MCF 10A (cell line): ENCODE measurements at regions of chr3 and their contacts with region 1.

Region 1: GRCh38 chr3:111717601-111718000 is 122.5 kb upstream of the ZBED2 start:
- DNase-seq: peak; percentile 92
- H3K4me3 Mint-ChIP-seq: no peak overlapping the region
- H3K27ac Mint-ChIP-seq: peak overlapping the region; percentile 27
- H3K4me1 Mint-ChIP-seq: peaks cover 20% of the 10 kb centered on the region
- H3K27me3 Mint-ChIP-seq: no peaks in the 10 kb centered on the region
- CTCF ChIP-seq: peak; percentile 82

Region 2: DNA sequence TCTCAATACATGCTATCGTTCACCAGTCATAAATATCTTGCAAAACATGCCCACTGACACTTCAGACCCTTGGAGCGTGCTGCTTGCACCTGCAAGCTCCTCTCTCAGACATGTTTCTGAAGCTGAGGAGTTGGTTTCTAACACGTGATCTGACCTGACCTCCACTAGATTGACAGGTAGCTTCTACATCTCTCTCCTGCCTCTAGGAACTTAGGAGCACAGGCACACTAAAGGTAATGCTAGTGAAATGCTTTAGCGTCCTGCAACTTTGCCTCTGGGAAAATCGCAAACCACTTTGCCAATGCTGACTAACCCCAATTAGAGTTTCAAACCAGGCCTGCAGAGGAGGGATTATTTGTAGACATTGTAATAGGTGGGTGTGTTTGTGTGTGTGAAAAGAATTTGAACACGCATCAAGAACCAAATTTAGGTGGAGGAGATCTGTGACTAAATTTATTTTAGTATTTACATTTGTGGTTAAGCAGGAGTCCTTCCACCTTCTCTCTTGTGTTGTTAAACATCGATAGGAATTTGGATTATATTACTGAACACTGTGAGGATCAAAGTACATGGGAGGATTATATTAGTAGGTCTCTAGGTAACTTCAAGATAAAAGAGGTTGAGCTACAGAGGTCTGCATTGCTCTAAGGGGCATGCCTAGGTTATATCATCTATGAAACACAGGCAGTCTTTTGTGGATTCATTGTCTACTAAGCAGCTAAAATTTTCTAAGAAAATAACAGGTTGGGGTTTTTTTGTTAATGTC is 35.8 kb before region 1 on chr3:
- CTCF ChIA-PET with region 1: interaction called, 10 read pairs
- POLR2A ChIA-PET with region 1: interaction called, 4 read pairs
- intact Hi-C with region 1: no loop called
- DNase-seq: no peak
- H3K4me3 Mint-ChIP-seq: no peak overlapping the region
- H3K27ac Mint-ChIP-seq: no peak overlapping the region
- H3K4me1 Mint-ChIP-seq: peaks cover 16% of the 10 kb centered on the region
- H3K27me3 Mint-ChIP-seq: no peaks in the 10 kb centered on the region
- CTCF ChIP-seq: no peak

Region 3: GRCh38 chr3:111737706-111738086 is 20.1 kb after region 1 on chr3:
- CTCF ChIA-PET with region 1: interaction called, 26 read pairs
- POLR2A ChIA-PET with region 1: interaction called, 27 read pairs
- intact Hi-C with region 1: no loop called
- DNase-seq: peak; percentile 89
- H3K4me3 Mint-ChIP-seq: no peak overlapping the region
- H3K27ac Mint-ChIP-seq: peak overlapping the region; percentile 58
- H3K4me1 Mint-ChIP-seq: peaks cover 40% of the 10 kb centered on the region
- H3K27me3 Mint-ChIP-seq: no peaks in the 10 kb centered on the region
- CTCF ChIP-seq: no peak

Region 4: GRCh38 chr3:111810909-111811308 is 93.3 kb after region 1 on chr3:
- CTCF ChIA-PET with region 1: interaction called, 14 read pairs
- POLR2A ChIA-PET with region 1: no interaction called
- intact Hi-C with region 1: no loop called
- DNase-seq: peak; percentile 86
- H3K4me3 Mint-ChIP-seq: no peak overlapping the region
- H3K27ac Mint-ChIP-seq: peak overlapping the region; percentile 80
- H3K4me1 Mint-ChIP-seq: peaks cover 43% of the 10 kb centered on the region
- H3K27me3 Mint-ChIP-seq: no peaks in the 10 kb centered on the region
- CTCF ChIP-seq: no peak

Region 5: DNA sequence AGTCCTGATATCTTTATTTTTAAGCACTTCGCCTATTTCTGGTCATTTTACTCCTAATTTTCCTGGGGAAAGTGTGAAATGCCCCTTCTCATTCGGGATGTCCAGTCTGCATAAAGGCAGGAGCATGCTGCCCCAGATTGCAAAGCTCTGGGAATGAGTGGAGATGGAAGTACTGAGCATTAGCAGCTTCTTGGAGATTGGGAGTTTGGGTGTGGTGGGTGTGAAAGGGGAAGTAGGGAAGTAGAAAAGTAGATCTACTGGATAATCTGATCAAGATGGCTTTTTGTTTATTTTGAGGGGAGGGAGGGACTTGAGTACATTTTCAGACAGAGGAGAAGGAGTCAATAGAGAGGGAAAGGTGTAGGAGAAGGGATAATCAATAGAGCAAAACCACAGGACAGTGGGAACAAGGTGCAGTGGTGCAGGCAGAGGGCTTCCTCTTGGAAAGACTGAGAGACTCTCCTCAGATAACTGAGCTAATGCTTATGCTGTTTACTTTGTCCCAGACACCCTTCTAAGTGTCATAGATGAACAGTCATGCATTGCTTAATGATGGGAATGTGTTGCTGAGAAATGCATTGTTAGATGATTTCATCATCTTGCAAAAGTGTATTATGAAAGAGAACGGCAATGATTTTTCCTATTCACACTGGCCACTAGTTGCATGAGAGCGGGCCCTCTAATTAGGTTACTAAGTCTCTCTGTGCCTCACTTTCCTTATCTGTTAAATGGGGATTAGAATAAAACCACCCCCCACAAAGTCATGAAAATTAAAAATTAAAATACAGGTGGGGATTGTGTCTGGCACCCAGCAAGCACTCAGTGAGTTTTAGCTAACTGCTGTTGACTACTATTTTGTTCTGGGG is 187.0 kb after region 1 on chr3:
- CTCF ChIA-PET with region 1: interaction called, 16 read pairs
- POLR2A ChIA-PET with region 1: no interaction called
- intact Hi-C with region 1: no loop called
- DNase-seq: peak; percentile 94
- H3K4me3 Mint-ChIP-seq: no peak overlapping the region
- H3K27ac Mint-ChIP-seq: peak overlapping the region; percentile 81
- H3K4me1 Mint-ChIP-seq: peaks cover 33% of the 10 kb centered on the region
- H3K27me3 Mint-ChIP-seq: no peaks in the 10 kb centered on the region
- CTCF ChIP-seq: peak; percentile 23

Region 6: GRCh38 chr3:112013058-112013783 is 295.6 kb after region 1 on chr3:
- CTCF ChIA-PET with region 1: interaction called, 12 read pairs
- POLR2A ChIA-PET with region 1: interaction called, 3 read pairs
- intact Hi-C with region 1: loop called (anchors 1 kb)
- DNase-seq: peak; percentile 75
- H3K4me3 Mint-ChIP-seq: no peak overlapping the region
- H3K27ac Mint-ChIP-seq: no peak overlapping the region
- H3K4me1 Mint-ChIP-seq: no peaks in the 10 kb centered on the region
- H3K27me3 Mint-ChIP-seq: no peaks in the 10 kb centered on the region
- CTCF ChIP-seq: peak; percentile 42